Activated naive CD4-positive, alpha-beta T cell treated with anti-CD3 and anti-CD28 coated beads for 36 hours (primary cell): ENCODE measurements at regions of chr6 and their contacts with region 1.

Region 1: GRCh38 chr6:30344868-30345671 is at the start of gene RPP21:
- DNase-seq: peak; percentile 94
- H3K4me3 Mint-ChIP-seq: peak within 1 kb of the TSS; percentile 87
- H3K27ac Mint-ChIP-seq: peak within 1 kb of the TSS; percentile 86
- H3K4me1 Mint-ChIP-seq: peaks cover 38% of the 10 kb centered on the region
- H3K27me3 Mint-ChIP-seq: no peaks in the 10 kb centered on the region
- total RNA-seq, gene RPP21: 44.8 to 45.0 TPM

Region 2: GRCh38 chr6:29720863-29721262 is 624.2 kb before region 1 on chr6:
- CTCF ChIA-PET with region 1: no interaction called
- intact Hi-C with region 1: no loop called
- DNase-seq: peak; percentile 64
- H3K4me3 Mint-ChIP-seq: no peak overlapping the region
- H3K27ac Mint-ChIP-seq: no peak overlapping the region
- H3K4me1 Mint-ChIP-seq: peaks cover 32% of the 10 kb centered on the region
- H3K27me3 Mint-ChIP-seq: no peaks in the 10 kb centered on the region

Region 3: GRCh38 chr6:30212865-30213666 is 132.0 kb before region 1 on chr6 and contains the start of gene TRIM26:
- CTCF ChIA-PET with region 1: interaction called, 3 read pairs
- intact Hi-C with region 1: loop called (anchors 1 kb)
- DNase-seq: peak; percentile 99
- H3K4me3 Mint-ChIP-seq: peak within 1 kb of the TSS; percentile 94
- H3K27ac Mint-ChIP-seq: peak within 1 kb of the TSS; percentile 99
- H3K4me1 Mint-ChIP-seq: peaks cover 41% of the 10 kb centered on the region
- H3K27me3 Mint-ChIP-seq: no peaks in the 10 kb centered on the region
- total RNA-seq, gene TRIM26: 36.8 to 38.7 TPM

Region 4: GRCh38 chr6:30219244-30219643 is 125.8 kb before region 1 on chr6:
- CTCF ChIA-PET with region 1: interaction called, 3 read pairs
- intact Hi-C with region 1: loop called (anchors 1 kb)
- DNase-seq: peak; percentile 73
- H3K4me3 Mint-ChIP-seq: no peak overlapping the region
- H3K27ac Mint-ChIP-seq: no peak overlapping the region
- H3K4me1 Mint-ChIP-seq: peaks cover 4% of the 10 kb centered on the region
- H3K27me3 Mint-ChIP-seq: no peaks in the 10 kb centered on the region

Region 5: DNA sequence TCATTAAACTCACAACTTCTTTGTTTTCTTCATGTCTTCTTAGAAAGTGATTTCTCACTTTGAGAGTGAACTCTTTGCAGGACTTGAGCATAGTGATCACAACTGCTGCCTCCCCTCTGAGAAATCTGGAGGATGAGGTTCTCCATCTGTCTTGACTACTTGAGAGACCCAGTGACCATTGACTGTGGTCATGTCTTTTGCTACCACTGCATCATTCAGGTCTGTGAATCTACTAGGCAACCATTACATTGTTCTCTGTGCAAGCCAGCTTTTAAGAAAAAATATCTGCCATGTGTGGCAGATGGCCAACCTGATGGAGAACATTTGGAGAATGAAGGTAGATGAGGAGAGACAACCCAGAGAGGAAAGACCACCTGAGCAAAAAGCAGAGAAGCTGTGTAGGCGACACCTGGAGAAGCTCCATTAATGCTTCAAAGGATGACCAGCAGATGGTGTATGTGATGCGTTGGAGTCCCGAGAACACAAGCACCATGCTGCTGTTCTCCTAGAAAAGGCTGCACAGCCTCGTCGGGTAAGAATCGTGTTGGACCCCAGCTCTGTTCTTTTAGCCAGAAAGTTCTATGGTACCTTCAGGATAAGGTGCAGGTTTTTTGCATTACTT is 106.8 kb before region 1 on chr6:
- CTCF ChIA-PET with region 1: no interaction called
- intact Hi-C with region 1: loop called (anchors 5 kb)
- DNase-seq: peak; percentile 55
- H3K4me3 Mint-ChIP-seq: no peak overlapping the region
- H3K27ac Mint-ChIP-seq: no peak overlapping the region
- H3K4me1 Mint-ChIP-seq: no peaks in the 10 kb centered on the region
- H3K27me3 Mint-ChIP-seq: peaks cover 11% of the 10 kb centered on the region

Region 6: DNA sequence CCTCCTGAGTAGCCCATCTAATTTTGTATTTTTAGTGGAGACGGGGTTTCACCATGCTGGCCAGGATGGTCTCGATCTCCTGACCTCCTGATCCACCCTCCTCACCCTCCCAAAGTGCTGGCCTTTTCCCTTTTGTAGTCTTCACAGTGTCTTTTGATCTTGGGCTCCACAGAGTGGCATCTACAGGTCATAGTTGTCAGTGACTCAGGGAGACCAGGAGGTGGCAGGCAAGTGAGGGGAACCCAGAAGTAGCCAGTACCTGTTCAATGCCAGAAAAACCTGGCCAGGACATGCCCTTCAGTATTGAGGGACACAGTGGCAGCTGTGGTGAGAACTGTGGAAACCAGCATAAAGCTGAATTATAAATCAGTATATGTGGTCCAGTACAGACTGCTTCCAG is 19.5 kb after region 1 on chr6:
- CTCF ChIA-PET with region 1: no interaction called
- intact Hi-C with region 1: no loop called
- DNase-seq: no peak
- H3K4me3 Mint-ChIP-seq: no peak overlapping the region
- H3K27ac Mint-ChIP-seq: no peak overlapping the region
- H3K4me1 Mint-ChIP-seq: no peaks in the 10 kb centered on the region
- H3K27me3 Mint-ChIP-seq: peaks cover 39% of the 10 kb centered on the region

Region 7: DNA sequence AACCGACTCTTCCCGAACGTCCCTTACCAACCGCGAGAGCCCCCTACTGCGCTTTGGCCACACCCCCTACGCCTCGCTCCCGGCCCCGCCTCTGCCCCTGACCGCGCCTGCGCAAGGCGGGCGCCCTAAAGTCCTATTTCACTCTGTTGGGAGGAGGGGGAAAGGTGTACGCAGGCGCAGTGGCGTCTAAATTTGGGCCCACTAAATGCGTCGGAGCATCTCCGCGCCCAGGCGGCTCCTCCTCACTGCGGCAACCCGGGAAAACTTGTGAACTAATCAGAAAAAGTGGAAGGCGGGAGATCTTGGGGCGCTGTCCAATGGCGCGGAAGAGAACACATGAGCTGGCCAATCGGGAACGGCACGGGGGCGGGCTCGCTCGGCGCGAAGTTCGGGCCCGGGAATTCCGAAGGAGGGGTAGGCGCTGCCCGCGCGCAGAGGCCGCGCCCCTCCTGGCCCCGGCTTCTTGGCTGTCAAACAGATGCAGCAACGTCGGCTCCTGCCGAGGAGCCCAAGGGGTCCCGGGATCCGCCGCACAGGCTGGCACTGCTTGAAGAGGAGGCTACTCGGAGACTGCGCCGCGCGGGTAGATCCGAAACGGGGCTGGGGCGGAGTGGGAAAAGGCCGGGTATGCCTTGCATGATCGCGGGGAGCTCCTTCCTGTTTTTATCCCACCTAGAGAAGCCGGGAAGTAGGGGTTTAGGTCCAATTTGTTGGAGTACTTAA is 813.2 kb after region 1 on chr6 and contains the start of gene TCF19:
- CTCF ChIA-PET with region 1: no interaction called
- intact Hi-C with region 1: loop called (anchors 10 kb)
- DNase-seq: peak; percentile 100
- H3K4me3 Mint-ChIP-seq: peak within 1 kb of the TSS; percentile 97
- H3K27ac Mint-ChIP-seq: peak within 1 kb of the TSS; percentile 83
- H3K4me1 Mint-ChIP-seq: peaks cover 37% of the 10 kb centered on the region
- H3K27me3 Mint-ChIP-seq: no peaks in the 10 kb centered on the region
- total RNA-seq, gene TCF19: 72.0 to 73.3 TPM